ENCODE measurements at regions of chr4 and their contacts with region 1.

Region 1: GRCh38 chr4:69896530-69897116 is 34.2 kb upstream of the CSN1S1 start:
- DNase-seq: no peak
- H3K4me3 ChIP-seq: no peak overlapping the region
- H3K27ac ChIP-seq: no peak overlapping the region
- H3K4me1 ChIP-seq: no peaks in the 10 kb centered on the region
- H3K27me3 ChIP-seq: peaks cover 0 to 3% of the 10 kb centered on the region in 2 experiments
- CTCF ChIP-seq: peak; percentile 13 to 21
- POLR2A ChIP-seq: no peak

Region 2: DNA sequence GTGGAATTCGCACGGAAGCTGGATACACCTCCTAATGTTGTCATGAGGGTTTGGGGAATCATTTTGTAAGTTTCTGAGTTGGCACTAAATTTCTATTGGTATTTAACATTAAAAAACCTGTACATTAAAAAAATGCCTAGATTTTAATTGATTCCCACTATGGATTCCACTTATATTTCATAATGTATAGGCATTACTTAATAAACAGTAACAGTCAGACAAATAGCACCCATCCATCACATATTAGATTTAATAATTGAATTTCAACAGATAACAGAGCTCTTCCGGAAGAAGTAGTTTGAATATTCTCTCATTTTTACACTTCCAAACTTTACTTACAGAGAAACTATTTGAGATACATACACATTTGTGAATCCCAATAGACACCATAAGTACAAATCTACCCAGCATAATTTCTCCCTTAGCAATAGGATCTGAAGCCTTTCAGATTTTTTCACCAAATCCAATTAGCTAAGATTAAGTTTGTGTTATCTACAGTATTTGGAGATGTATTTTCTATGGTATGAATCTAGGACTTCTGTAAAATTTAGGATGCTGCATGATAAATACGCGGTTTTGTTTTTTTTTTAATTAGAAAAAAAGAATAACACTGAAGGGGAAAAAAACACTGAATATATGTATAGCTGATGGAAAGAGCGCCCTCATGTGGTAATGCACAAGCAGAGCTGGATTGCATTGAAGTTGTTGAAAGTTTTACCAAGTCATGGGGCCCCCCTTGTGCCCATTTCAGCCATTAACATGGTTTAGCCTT is 286.7 kb after region 1 on chr4:
- CTCF ChIA-PET with region 1: interaction called, 75 read pairs
- POLR2A ChIA-PET with region 1: no interaction called
- dilution Hi-C with region 1: no loop called
- intact Hi-C with region 1: loop called (anchors 1 kb)
- DNase-seq: peak; percentile 53
- H3K4me3 ChIP-seq: no peak overlapping the region
- H3K27ac ChIP-seq: no peak overlapping the region
- H3K4me1 ChIP-seq: no peaks in the 10 kb centered on the region
- H3K27me3 ChIP-seq: no peaks in the 10 kb centered on the region
- CTCF ChIP-seq: peak; percentile 72 to 80
- POLR2A ChIP-seq: no peak

Region 3: GRCh38 chr4:70269674-70270073 is 373.1 kb after region 1 on chr4:
- CTCF ChIA-PET with region 1: interaction called, 33 read pairs
- POLR2A ChIA-PET with region 1: no interaction called
- dilution Hi-C with region 1: no loop called
- intact Hi-C with region 1: loop called (anchors 5 kb)
- DNase-seq: peak; percentile 10
- H3K4me3 ChIP-seq: no peak overlapping the region
- H3K27ac ChIP-seq: no peak overlapping the region
- H3K4me1 ChIP-seq: no peaks in the 10 kb centered on the region
- H3K27me3 ChIP-seq: no peaks in the 10 kb centered on the region
- CTCF ChIP-seq: peak in 1 of 2 donors; percentile 7
- POLR2A ChIP-seq: no peak

Region 4: DNA sequence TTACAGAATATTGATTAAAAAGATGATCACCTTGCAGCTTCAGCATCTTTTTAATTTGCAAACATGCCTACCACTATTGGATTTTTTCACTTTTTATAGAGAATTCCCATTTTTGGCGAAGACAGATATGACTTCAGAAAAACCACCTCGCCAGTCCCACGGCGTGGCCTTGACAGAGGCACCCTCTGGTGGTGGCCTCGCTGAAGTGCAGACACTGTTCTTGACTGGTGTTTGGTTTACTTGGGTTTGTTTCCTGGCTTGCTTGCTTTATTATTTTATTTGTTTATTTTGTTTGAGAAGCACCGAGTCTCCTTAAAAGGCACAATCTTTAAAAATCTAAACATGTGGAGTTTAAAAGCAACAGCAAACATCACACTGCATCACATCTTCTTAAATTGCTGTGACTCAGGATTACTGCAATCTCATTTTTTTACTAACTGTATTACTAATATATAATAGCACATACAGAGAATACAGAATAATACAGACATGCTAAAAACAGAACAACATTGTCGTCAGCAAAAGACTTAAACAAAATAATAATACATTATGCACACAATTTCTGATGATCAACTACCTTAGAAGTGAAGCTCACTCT is 608.6 kb after region 1 on chr4:
- CTCF ChIA-PET with region 1: interaction called, 21 read pairs
- POLR2A ChIA-PET with region 1: no interaction called
- dilution Hi-C with region 1: no loop called
- intact Hi-C with region 1: loop called (anchors 1 kb)
- DNase-seq: peak; percentile 54
- H3K4me3 ChIP-seq: no peak overlapping the region
- H3K27ac ChIP-seq: no peak overlapping the region
- H3K4me1 ChIP-seq: no peaks in the 10 kb centered on the region
- H3K27me3 ChIP-seq: peaks cover 0 to 1% of the 10 kb centered on the region in 2 experiments
- CTCF ChIP-seq: peak; percentile 90 to 94
- POLR2A ChIP-seq: no peak

Region 5: GRCh38 chr4:70559211-70559830 is 662.7 kb after region 1 on chr4:
- CTCF ChIA-PET with region 1: interaction called, 6 read pairs
- POLR2A ChIA-PET with region 1: no interaction called
- dilution Hi-C with region 1: no loop called
- intact Hi-C with region 1: loop called (anchors 5 kb)
- DNase-seq: peak; percentile 47
- H3K4me3 ChIP-seq: no peak overlapping the region
- H3K27ac ChIP-seq: no peak overlapping the region
- H3K4me1 ChIP-seq: no peaks in the 10 kb centered on the region
- H3K27me3 ChIP-seq: no peaks in the 10 kb centered on the region
- CTCF ChIP-seq: peak; percentile 53 to 61
- POLR2A ChIP-seq: no peak

Measured in endothelial cell of umbilical vein (primary cell).